ENCODE measurements at regions of chr3 and their contacts with region 1.

Region 1: DNA sequence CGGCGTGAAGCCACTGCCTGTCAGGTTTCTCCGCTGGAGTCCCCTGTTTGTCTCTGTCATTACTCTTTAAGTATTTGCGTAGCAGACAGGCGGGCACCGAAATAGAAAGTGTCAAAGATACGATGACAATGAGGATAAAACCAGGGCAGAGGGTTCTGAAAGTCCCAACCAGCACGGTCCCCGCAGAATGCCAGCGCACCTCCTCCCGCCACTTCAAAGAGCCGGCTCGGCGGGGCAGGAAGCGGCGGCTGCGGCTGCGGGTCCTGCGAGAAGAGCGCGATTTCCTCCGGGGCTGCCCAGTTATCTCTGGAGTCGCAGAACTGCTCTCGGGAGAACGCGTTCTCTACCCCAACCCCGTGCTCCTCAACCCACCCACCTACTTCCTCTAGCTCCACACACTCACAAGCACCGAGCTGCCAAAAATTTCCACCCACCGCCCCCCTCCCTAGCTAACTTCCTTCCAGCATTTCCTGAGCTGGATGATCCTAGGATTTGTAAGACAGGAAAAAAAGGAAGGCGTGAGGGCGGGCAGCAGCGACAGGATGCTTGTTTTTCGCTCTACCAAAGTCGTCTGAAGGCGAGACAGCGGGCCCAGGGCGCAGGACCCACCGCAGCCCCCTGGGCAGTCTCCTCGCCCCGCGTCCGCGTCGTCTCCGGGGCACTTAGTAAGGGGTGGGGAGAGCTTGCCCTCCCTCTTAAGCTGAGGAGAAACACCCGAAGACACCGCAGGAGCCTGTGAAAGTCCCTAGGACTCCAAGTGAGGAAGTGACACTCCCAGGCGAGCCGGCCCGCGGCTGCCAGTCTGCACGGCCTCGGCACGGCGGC is at the start of gene ARHGAP31:
- DNase-seq: peak; percentile 82 to 89 (median 89)
- ATAC-seq: peak; percentile 82 to 90
- H3K4me3 ChIP-seq: peak within 1 kb of the TSS; percentile 86
- H3K27ac ChIP-seq: peak within 1 kb of the TSS; percentile 99
- H3K4me1 ChIP-seq: peaks cover 18% of the 10 kb centered on the region
- H3K27me3 ChIP-seq: no peaks in the 10 kb centered on the region
- total RNA-seq, gene ARHGAP31: 41.3 to 52.3 (median 48.5) TPM

Region 2: GRCh38 chr3:119343719-119344118 is 49.6 kb after region 1 on chr3:
- intact Hi-C with region 1: loop called in 2 of 4 experiments (anchors 5 to 10 kb)
- DNase-seq: no peak
- ATAC-seq: no peak
- H3K4me3 ChIP-seq: no peak overlapping the region
- H3K27ac ChIP-seq: no peak overlapping the region
- H3K4me1 ChIP-seq: peaks cover 10% of the 10 kb centered on the region
- H3K27me3 ChIP-seq: no peaks in the 10 kb centered on the region

Region 3: DNA sequence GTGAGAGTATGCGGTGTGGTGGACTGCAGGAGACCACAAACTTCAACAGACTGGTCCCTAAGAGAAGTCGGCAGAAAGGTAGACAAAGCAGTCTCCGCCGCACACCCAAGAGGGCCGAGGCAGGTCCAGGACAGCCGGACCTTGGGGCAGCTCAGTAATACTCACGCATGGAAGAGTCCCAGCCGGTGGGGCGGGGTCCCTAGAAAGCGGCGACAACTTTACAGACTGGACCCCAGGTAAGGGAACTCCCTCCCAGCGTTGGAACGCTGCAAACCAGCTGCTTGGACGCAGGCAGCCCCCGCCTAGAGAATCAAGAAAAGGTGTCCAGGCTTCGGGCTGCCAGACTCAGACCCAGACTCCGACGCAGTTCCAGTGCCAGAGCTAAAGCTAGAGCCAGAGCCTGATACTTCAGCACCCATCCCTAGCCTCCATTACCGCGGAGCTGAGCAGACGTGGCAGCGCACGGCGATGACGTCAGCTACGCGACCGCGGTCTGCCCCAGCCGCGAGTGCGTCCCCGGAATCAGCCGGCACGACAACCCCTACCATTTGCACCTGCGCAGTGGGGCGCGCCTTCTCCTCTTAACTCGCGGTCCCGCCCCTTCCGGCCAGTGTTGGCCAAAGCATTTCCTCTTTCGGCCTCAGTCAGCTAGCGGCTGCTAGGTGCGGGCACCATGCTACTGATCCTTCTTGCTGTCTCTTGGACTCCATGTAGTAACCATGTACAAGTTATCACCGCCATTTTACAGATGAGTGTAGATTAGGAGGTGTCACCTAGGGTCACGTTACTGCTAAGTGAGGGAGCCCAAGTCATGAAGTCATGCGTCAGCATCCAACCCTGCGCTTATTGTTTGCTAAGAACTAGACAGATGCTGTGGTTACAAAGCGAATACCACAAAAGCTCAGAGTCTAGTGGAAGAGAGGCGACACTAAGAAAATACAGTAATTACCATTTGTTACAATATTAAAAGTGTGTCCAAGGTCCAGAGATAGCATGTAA is 169.4 kb after region 1 on chr3 and contains the start of gene TMEM39A:
- intact Hi-C with region 1: loop called in 1 of 4 experiments (anchors 10 kb)
- DNase-seq: peak; percentile 100
- ATAC-seq: peak; percentile 98 to 99
- H3K4me3 ChIP-seq: peak within 1 kb of the TSS; percentile 81
- H3K27ac ChIP-seq: peak within 1 kb of the TSS; percentile 81
- H3K4me1 ChIP-seq: peaks cover 5% of the 10 kb centered on the region
- H3K27me3 ChIP-seq: no peaks in the 10 kb centered on the region
- total RNA-seq, gene TMEM39A: 18.4 to 36.0 (median 24.3) TPM